ENCODE measurements at regions of chr12 and their contacts with region 1.

Region 1: GRCh38 chr12:82383930-82384552 is 25.7 kb downstream of the METTL25 start:
- DNase-seq: peak in 1 of 2 experiments; percentile 22
- H3K4me3 ChIP-seq: no peak overlapping the region
- H3K4me3 Mint-ChIP-seq: no peak overlapping the region
- H3K27ac Mint-ChIP-seq: no peak overlapping the region
- H3K4me1 ChIP-seq: no peaks in the 10 kb centered on the region
- H3K4me1 Mint-ChIP-seq: no peaks in the 10 kb centered on the region
- H3K27me3 ChIP-seq: no peaks in the 10 kb centered on the region
- H3K27me3 Mint-ChIP-seq: no peaks in the 10 kb centered on the region
- CTCF ChIP-seq: peak; percentile 47 to 50

Region 2: GRCh38 chr12:82517027-82517426 is 133.0 kb after region 1 on chr12:
- CTCF ChIA-PET with region 1: interaction called, 3 read pairs
- POLR2A ChIA-PET with region 1: no interaction called
- intact Hi-C with region 1: loop called (anchors 2 kb)
- DNase-seq: peak; percentile 33 to 41
- H3K4me3 ChIP-seq: no peak overlapping the region
- H3K4me3 Mint-ChIP-seq: no peak overlapping the region
- H3K27ac Mint-ChIP-seq: no peak overlapping the region
- H3K4me1 ChIP-seq: no peaks in the 10 kb centered on the region
- H3K4me1 Mint-ChIP-seq: no peaks in the 10 kb centered on the region
- H3K27me3 ChIP-seq: no peaks in the 10 kb centered on the region
- H3K27me3 Mint-ChIP-seq: no peaks in the 10 kb centered on the region
- CTCF ChIP-seq: peak; percentile 47 to 72

Region 3: GRCh38 chr12:82527165-82527780 is 143.2 kb after region 1 on chr12:
- CTCF ChIA-PET with region 1: no interaction called
- POLR2A ChIA-PET with region 1: no interaction called
- intact Hi-C with region 1: loop called (anchors 1 kb)
- DNase-seq: peak in 1 of 2 experiments; percentile 58
- H3K4me3 ChIP-seq: no peak overlapping the region
- H3K4me3 Mint-ChIP-seq: no peak overlapping the region
- H3K27ac Mint-ChIP-seq: no peak overlapping the region
- H3K4me1 ChIP-seq: peaks cover 9% of the 10 kb centered on the region
- H3K4me1 Mint-ChIP-seq: peaks cover 9% of the 10 kb centered on the region
- H3K27me3 ChIP-seq: no peaks in the 10 kb centered on the region
- H3K27me3 Mint-ChIP-seq: peaks cover 2% of the 10 kb centered on the region
- CTCF ChIP-seq: peak; percentile 81 to 84

Region 4: DNA sequence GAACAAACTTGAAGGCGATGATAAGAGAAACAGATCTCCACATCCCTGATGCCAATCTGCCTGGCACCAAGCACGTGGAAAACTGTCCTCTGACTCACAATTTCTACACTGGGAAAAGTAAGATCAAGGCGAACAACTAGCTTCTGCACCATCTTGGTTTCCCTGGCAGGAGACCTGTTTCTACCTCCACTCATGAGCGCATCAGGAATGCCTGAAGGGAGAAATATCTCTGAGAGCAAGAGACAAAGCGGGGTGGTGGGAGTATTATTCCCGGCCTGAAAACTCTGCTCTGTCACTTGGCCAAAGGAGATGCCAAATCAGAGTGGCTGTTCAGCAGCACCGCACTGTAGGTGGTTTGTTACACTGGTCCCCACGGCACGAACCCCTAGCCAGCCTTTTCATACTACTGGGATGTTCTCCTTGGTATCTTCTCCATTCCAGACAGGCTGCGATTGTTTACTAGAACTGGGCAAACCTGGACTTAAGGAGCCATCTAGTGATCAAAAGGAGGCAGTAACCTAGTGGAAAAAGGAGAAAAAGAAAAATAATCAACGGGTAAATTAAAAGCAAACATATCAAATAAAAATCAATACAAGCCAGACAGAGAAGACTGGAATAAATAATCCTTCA is 243.6 kb after region 1 on chr12:
- CTCF ChIA-PET with region 1: no interaction called
- POLR2A ChIA-PET with region 1: no interaction called
- intact Hi-C with region 1: loop called (anchors 1 kb)
- DNase-seq: peak in 1 of 2 experiments; percentile 30
- H3K4me3 ChIP-seq: no peak overlapping the region
- H3K4me3 Mint-ChIP-seq: no peak overlapping the region
- H3K27ac Mint-ChIP-seq: no peak overlapping the region
- H3K4me1 ChIP-seq: no peaks in the 10 kb centered on the region
- H3K4me1 Mint-ChIP-seq: no peaks in the 10 kb centered on the region
- H3K27me3 ChIP-seq: no peaks in the 10 kb centered on the region
- H3K27me3 Mint-ChIP-seq: peaks cover 7% of the 10 kb centered on the region
- CTCF ChIP-seq: peak; percentile 51 to 54

Measured in Caco-2 (cell line).